Activated B cell treated with CpG ODN at 0.5 μM for 24 hours (primary cell): ENCODE measurements at regions of chr9 and their contacts with region 1.

Region 1: DNA sequence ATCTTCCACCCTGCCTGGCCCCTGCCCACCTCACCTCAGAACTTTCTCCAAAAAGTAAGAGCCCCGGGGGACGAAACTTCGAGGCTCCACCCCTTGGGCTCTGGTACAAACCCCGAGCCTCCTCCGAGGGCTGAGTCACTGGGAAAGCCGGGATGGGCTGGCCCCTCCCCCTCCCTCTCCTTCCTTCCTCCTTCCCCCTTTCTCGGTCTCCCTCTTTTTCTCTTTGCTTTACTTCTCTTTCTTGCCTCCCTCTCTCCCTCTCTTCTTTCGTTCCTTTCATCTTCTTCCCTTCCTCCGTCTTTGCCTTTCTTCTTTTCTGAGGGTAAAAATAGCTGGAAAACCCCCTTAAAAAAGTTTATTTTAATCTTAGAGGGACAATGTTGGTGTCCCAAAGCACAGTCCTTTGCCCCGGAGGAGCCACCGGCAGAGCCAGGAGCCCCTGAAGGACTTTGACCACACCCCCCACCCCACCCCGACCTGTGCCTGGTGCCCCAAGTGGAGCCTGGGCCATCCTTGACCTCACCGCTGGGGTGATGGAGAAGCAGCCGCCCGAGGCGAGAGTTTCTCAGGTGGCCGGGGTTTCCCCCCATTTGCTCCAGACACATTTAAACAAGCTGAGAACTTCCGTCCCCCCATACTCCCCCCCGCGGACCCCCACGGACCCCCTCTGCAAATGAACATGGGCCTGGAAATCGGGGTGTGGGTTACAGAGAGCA is 5.7 kb upstream of the NOTCH1 start:
- DNase-seq: no peak
- ATAC-seq: peak; percentile 53
- H3K4me3 Mint-ChIP-seq: peak overlapping the region; percentile 72
- H3K27ac Mint-ChIP-seq: peak overlapping the region; percentile 78
- H3K4me1 Mint-ChIP-seq: peaks cover 36% of the 10 kb centered on the region
- H3K27me3 Mint-ChIP-seq: no peaks in the 10 kb centered on the region
- CTCF ChIP-seq: no peak

Region 2: DNA sequence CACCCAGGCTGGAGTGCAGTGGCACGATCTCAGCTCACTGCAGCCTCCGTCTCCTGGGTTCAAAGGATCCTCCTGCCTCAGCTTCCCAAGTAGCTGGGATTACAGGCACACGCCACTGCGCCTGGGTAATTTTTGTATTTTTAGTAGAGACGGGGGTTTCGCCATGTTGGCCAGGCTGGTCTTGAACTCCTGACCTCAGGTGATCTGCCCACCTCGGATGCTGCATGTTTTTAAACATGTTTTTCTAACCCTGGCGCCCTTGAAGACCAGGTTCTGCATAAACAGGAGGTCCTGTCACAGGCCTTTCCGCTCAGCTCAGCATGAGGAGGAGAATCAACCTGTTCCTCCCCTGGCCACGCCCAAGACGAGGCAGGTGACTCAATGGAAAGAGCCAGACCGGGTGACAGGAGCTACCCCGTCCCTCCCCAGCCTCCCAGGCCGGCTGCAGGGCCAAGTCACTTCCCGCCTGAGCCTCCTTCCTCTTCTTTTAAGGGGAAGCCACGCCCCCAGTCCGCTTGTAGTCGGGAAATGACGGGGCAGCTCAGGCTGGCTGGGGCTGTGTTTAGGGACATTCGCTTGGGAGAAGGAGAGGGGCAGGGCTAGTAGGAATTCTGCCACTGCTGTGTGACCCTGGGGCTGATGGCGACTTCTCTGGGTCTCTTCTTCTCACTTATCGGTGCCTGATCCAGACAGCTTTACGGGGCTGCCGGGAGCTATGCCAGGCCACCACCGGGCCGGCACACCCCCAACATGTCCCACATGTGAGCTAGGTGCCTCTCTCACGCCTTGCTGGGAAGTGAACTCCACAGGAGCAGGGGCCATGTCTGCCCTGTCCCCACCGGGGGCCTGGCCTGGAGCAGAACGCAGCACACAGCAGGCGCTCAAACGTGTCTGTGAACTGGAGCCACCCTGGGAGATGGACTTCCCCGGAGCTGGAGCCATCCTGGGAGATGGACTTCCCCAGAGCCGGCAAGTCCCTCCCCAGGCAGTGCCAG is 11.8 kb before region 1 on chr9:
- CTCF ChIA-PET with region 1: no interaction called
- POLR2A ChIA-PET with region 1: interaction called, 25 read pairs
- intact Hi-C with region 1: loop called (anchors 1 kb)
- DNase-seq: peak; percentile 66
- ATAC-seq: peak; percentile 72
- H3K4me3 Mint-ChIP-seq: peak overlapping the region; percentile 76
- H3K27ac Mint-ChIP-seq: peak overlapping the region; percentile 91
- H3K4me1 Mint-ChIP-seq: peaks cover 71% of the 10 kb centered on the region
- H3K27me3 Mint-ChIP-seq: no peaks in the 10 kb centered on the region
- CTCF ChIP-seq: no peak

Region 3: DNA sequence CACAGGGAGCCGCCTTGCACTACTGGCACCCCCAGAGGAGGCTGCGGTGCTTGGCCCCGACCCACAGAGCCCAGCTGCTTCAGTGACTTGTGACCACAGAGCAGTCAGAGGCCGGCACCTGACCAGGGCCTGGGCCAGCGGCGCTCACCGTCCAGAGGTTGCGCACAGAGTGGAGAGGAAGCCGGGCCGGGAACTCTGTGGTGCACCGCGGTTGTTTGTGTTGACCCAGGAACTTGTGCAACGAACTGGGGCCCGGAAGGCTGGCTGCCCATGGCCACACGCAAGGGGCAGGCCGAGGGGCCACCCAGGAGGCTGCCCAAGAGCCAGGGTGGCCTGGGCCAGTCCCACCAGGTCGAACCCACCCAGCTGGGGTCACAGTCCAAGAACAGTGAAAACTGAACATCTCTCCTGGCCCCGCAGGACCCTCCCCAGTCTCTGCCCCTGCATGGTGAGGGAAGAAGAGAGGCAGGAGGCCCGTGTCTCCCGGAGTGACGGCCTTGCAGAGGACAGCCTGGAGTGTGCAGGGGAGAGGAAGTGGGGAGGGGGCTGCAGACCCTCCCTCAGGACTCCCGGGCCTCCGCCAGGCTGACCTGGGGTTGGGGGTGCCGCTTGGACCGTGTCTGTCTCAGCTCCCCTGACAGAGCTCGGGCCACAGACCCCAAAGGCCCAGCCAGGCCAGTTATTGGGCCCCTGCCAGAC is 68.3 kb after region 1 on chr9:
- CTCF ChIA-PET with region 1: interaction called, 3 read pairs
- POLR2A ChIA-PET with region 1: interaction called, 6 read pairs
- intact Hi-C with region 1: loop called (anchors 1 kb)
- DNase-seq: no peak
- ATAC-seq: no peak
- H3K4me3 Mint-ChIP-seq: peak overlapping the region; percentile 44
- H3K27ac Mint-ChIP-seq: peak overlapping the region; percentile 66
- H3K4me1 Mint-ChIP-seq: peaks cover 40% of the 10 kb centered on the region
- H3K27me3 Mint-ChIP-seq: no peaks in the 10 kb centered on the region
- CTCF ChIP-seq: no peak